PC-3 (cell line): ENCODE measurements at regions of chr1 and their contacts with region 1.

Region 1: DNA sequence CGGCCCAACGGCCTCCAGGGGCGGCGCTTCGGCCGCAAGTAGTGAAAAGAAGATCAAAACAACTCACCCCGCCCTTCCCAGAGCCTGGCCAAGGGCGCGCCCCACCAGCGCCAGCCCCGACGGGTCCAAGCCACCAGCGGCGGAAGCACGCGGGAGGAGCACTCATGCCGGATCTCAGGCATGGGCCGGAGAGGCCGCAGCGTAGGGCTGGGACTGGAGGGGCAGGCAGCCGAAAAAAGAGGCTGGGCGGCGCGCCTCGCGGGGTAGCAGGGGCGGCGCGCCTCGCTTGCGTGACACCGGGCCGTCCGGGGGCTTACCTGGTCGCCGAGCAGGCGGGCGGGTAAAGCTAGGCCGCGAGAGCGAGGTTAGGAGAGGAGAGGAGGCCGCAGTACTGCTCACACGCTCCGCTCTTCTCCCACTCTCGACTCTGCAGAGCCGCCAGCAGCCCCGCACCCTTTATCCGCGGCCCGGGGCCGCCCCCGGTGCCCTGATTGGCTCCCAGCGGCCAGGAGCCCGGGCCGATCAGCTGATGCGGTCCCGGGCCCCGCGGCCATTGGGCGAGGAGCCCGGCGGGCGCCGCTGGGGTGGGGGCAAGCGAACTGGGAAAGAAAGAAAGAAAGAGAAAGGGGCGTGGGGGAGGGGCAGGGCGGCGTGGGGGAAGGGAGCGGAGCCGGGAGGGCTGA is at the start of gene GLUL:
- DNase-seq: peak; percentile 88
- ATAC-seq: peak; percentile 88
- H3K4me3 ChIP-seq: peak within 1 kb of the TSS; percentile 95
- H3K27ac ChIP-seq: peak within 1 kb of the TSS; percentile 73
- H3K4me1 ChIP-seq: peaks cover 12% of the 10 kb centered on the region
- H3K27me3 ChIP-seq: no peaks in the 10 kb centered on the region
- CTCF ChIP-seq: no peak
- total RNA-seq, gene GLUL: 131 and 159 TPM in 2 replicates

Region 2: DNA sequence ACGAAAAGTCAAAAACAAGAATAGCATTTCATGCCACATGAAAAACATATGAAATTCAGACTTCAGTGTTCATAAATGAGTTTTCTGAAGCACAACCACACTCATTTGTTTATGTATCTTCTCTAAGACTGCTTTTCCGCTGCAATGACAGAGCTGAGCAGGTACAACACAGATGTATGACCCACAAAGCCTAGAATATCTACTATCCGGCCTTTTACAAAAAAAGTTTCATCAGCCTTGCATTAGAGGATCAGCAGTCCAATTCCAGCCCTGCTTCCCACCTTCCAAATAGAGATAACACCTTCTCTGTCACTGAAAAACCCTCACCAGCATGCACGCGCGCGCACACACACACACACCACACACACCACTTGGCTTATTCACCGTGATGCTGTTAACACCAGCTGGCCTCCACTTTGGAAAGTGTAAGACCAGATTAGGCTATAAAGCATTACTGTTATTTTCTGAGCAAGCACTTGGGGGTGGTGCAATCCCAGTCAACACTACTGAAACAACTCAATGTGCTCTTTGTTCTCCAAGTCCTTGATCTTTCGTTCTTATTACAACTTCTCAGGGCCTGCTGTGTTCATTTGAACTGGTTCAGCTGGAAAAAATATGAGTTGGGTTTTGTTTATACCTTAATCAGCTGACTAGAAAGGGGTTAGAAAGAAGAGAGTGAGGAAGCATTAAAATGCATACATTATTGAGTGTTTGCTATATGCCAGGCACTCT is 89.9 kb before region 1 on chr1:
- CTCF ChIA-PET with region 1: interaction called, 4 read pairs
- POLR2A ChIA-PET with region 1: no interaction called
- intact Hi-C with region 1: loop called (anchors 5 kb)
- DNase-seq: no peak
- ATAC-seq: peak; percentile 33; the same call in 1 of the 2 replicates
- H3K4me3 ChIP-seq: no peak overlapping the region
- H3K27ac ChIP-seq: no peak overlapping the region
- H3K4me1 ChIP-seq: no peaks in the 10 kb centered on the region
- H3K27me3 ChIP-seq: no peaks in the 10 kb centered on the region
- CTCF ChIP-seq: no peak

Region 3: DNA sequence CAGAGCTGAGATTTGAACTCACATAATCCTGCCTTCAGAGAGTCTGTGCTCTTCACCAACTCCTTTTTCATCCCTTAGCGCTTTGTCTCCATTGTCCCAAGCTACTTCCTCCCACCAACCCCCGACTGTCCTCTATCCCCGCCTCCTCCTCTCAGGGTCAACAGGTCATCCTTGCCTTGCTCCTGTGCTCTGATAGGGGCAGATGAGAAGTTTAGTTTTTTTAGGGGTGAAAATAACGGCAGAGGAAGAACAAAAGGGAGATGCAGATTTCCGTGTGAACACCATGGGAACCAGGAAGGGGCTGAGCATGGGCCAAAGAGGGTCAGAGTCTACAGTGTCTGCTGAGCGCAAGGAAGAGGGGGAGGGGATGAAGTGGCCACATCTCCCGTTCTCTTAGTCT is 31.9 kb before region 1 on chr1:
- CTCF ChIA-PET with region 1: no interaction called
- POLR2A ChIA-PET with region 1: interaction called, 12 read pairs
- intact Hi-C with region 1: no loop called
- DNase-seq: no peak
- ATAC-seq: no peak
- H3K4me3 ChIP-seq: no peak overlapping the region
- H3K27ac ChIP-seq: no peak overlapping the region
- H3K4me1 ChIP-seq: no peaks in the 10 kb centered on the region
- H3K27me3 ChIP-seq: no peaks in the 10 kb centered on the region
- CTCF ChIP-seq: no peak

Region 4: GRCh38 chr1:182495002-182495401 is 103.5 kb after region 1 on chr1:
- CTCF ChIA-PET with region 1: no interaction called
- POLR2A ChIA-PET with region 1: no interaction called
- intact Hi-C with region 1: no loop called
- DNase-seq: no peak
- ATAC-seq: no peak
- H3K4me3 ChIP-seq: no peak overlapping the region
- H3K27ac ChIP-seq: no peak overlapping the region
- H3K4me1 ChIP-seq: no peaks in the 10 kb centered on the region
- H3K27me3 ChIP-seq: no peaks in the 10 kb centered on the region
- CTCF ChIP-seq: no peak

Region 5: GRCh38 chr1:182839209-182840065 is 447.9 kb after region 1 on chr1 and contains the start of gene DHX9:
- CTCF ChIA-PET with region 1: no interaction called
- POLR2A ChIA-PET with region 1: no interaction called
- intact Hi-C with region 1: no loop called
- DNase-seq: peak; percentile 82
- ATAC-seq: peak; percentile 81
- H3K4me3 ChIP-seq: peak within 1 kb of the TSS; percentile 98
- H3K27ac ChIP-seq: peak within 1 kb of the TSS; percentile 71
- H3K4me1 ChIP-seq: peaks cover 11% of the 10 kb centered on the region; the same call in 1 of the 2 replicates
- H3K27me3 ChIP-seq: no peaks in the 10 kb centered on the region
- CTCF ChIP-seq: no peak
- total RNA-seq, gene DHX9: 191 and 195 TPM in 2 replicates